Colonic mucosa (tissue), 4 donors: ENCODE measurements at regions of chr1 and their contacts with region 1.

Region 1: GRCh38 chr1:204503122-204503912 is 8.7 kb upstream of the PIK3C2B start:
- DNase-seq: peak; percentile 61
- H3K4me3 ChIP-seq: no peak overlapping the region
- H3K27ac ChIP-seq: no peak overlapping the region
- H3K4me1 ChIP-seq: no peaks in the 10 kb centered on the region
- H3K27me3 ChIP-seq: no peaks in the 10 kb centered on the region
- CTCF ChIP-seq: peak; percentile 78

Region 2: GRCh38 chr1:204431310-204432165 is 71.8 kb before region 1 on chr1:
- intact Hi-C with region 1: loop called (anchors 5 kb)
- DNase-seq: peak; percentile 83
- H3K4me3 ChIP-seq: no peak overlapping the region
- H3K27ac ChIP-seq: no peak overlapping the region
- H3K4me1 ChIP-seq: no peaks in the 10 kb centered on the region
- H3K27me3 ChIP-seq: no peaks in the 10 kb centered on the region
- CTCF ChIP-seq: peak; percentile 85

Region 3: DNA sequence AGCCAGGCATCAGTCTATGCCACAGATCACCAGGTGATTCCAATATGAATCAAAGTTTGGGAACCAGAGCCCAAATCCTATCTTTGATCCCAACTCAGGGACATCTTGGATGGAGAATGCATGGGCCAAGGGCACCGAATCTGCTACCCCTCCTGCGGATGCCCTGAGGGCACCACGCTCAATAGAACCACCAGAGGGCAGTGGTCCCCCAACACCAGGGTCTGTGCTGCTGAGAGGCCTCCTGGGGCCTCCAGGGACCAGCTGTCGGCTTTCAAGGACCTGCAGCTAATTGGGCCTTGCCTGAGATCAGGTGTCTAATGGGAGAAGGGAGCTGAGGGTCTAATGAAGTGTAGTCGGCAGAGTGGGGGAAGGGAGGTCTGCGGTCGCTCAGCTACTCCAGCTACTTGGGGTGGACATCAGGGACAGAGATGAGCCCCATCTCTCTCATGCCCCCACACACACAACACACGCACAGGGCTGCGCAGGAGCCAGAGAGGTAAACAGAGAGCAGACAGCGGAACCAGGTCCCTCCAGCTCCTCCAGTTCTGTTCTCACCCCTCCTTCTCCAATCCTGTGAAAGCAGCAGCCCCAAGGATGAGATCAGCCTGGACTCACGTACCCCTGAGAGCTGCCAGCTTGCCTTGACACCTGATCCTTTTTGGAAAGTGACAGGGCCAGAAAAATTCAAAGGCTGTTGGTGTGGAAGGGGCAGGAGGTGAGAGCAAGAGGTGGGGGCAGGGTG is 56.8 kb before region 1 on chr1:
- intact Hi-C with region 1: loop called (anchors 2 kb)
- DNase-seq: peak; percentile 79
- H3K4me3 ChIP-seq: no peak overlapping the region
- H3K27ac ChIP-seq: no peak overlapping the region
- H3K4me1 ChIP-seq: peaks cover 20% of the 10 kb centered on the region
- H3K27me3 ChIP-seq: no peaks in the 10 kb centered on the region
- CTCF ChIP-seq: peak; percentile 64

Region 4: GRCh38 chr1:204556458-204557052 is 53.2 kb after region 1 on chr1:
- intact Hi-C with region 1: no loop called
- DNase-seq: no peak
- H3K4me3 ChIP-seq: no peak overlapping the region
- H3K27ac ChIP-seq: no peak overlapping the region
- H3K4me1 ChIP-seq: no peaks in the 10 kb centered on the region
- H3K27me3 ChIP-seq: no peaks in the 10 kb centered on the region
- CTCF ChIP-seq: no peak

Region 5: DNA sequence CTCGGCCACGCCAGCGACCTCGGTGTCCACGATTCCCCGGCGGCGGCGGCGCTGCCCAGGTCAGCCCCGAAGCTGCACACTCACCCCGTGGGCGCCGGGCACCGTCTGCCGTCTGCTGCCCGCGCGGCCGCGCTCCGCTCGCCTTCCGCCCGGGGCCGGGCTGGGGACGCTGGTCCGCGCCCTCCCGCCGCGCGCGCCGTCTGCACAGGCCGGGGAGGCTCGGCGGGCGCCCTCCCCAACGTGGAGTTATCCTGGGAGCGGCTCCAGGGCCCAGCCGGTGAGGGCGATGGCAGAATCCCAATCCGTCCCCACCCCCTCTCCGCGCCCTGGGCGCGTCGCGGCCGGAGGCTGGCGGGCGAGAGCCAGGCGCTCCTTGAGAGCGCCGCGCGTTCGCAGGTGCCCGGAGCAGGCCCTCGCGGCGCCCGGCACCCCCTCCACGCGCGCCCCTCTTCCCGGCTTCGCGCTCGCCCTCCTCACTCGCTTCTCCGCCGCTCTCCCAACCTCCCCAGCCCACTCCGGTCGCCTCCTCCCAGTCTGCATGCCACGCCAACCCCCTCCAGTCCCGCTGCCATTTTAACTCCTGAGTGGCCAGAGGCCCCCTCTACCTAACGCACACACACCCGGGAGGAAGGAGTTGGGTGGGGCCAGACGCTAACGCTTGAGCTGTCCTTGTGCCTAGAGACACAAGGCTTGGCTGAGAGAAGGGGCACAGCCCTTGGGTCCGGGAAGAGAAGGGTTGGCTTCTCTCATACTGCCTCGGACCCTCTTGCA is 182.1 kb after region 1 on chr1 and contains the start of gene LRRN2:
- intact Hi-C with region 1: no loop called
- DNase-seq: peak; percentile 69
- H3K4me3 ChIP-seq: peak within 1 kb of the TSS; percentile 56
- H3K27ac ChIP-seq: peak within 1 kb of the TSS; percentile 24
- H3K4me1 ChIP-seq: peaks cover 6% of the 10 kb centered on the region
- H3K27me3 ChIP-seq: peaks cover 3% of the 10 kb centered on the region
- CTCF ChIP-seq: no peak
- total RNA-seq, gene LRRN2: 13.1 to 13.9 TPM